PC-9 (cell line): ENCODE measurements at regions of chr10 and their contacts with region 1.

Region 1: GRCh38 chr10:43648398-43649184 is at the start of gene ZNF32:
- DNase-seq: peak; percentile 53 to 77
- H3K4me3 ChIP-seq: peak within 1 kb of the TSS; percentile 66
- H3K27ac ChIP-seq: no peak within 1 kb of the TSS
- H3K4me1 ChIP-seq: no peaks in the 10 kb centered on the region
- H3K27me3 ChIP-seq: peaks cover 23% of the 10 kb centered on the region; the same call in 1 of the 2 replicates
- CTCF ChIP-seq: no peak
- total RNA-seq, gene ZNF32: 9.8 and 16.8 TPM in 2 replicates

Region 2: DNA sequence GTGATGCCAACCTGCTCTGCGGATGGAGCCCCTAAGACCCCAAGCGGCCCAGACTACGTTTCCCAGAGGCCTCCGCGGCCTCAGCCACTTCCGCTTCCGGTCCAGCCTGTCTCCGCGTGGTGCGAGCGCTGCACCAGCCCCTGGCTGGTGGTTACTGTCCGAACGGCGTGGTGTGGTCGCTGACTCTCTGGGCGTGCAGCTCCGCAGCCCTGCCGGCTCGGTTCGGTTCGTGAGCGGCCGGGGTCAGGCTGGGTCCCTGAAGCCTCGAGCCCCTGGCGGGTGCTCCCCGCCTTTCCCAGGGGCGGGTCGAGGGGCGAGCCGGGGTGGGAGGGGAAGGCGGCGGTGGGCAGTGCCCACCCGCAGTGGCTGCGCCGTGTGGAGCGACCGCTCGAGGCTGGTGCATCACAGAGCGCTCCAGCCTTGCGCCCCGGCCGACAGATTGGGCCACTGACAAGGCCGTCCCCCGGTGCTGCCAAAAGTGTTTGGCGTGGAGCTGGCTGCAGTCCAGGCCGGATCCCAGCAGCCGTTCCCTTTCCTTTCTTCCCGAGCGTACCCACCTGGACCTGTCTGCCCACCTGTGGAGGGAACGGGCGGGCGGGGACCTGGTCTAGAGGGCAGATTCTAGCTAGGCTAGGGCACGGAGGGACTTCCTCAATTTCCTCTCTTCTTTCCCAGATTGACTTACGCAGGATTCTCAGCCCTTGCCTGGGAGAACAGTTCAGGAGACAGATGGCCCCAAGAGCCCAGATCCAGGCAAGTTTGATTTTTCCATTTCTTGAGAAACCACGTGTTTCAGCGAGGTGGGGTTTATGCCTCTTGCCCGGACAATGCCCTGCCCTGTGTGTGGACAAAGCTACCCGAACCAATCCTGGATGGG is 42.0 kb before region 1 on chr10 and contains the start of gene ZNF485:
- CTCF ChIA-PET with region 1: no interaction called
- POLR2A ChIA-PET with region 1: no interaction called
- intact Hi-C with region 1: loop called (anchors 1 kb)
- DNase-seq: peak in 1 of 2 experiments; percentile 55
- H3K4me3 ChIP-seq: peak within 1 kb of the TSS; percentile 85
- H3K27ac ChIP-seq: no peak within 1 kb of the TSS
- H3K4me1 ChIP-seq: peaks cover 6% of the 10 kb centered on the region; the same call in 1 of the 2 replicates
- H3K27me3 ChIP-seq: peaks cover 15% of the 10 kb centered on the region; the same call in 1 of the 2 replicates
- CTCF ChIP-seq: no peak
- total RNA-seq, gene ZNF485: 2.1 and 3.7 TPM in 2 replicates

Region 3: GRCh38 chr10:43679509-43679908 is 30.9 kb after region 1 on chr10:
- CTCF ChIA-PET with region 1: no interaction called
- POLR2A ChIA-PET with region 1: no interaction called
- intact Hi-C with region 1: no loop called
- DNase-seq: no peak
- H3K4me3 ChIP-seq: no peak overlapping the region
- H3K27ac ChIP-seq: no peak overlapping the region
- H3K4me1 ChIP-seq: no peaks in the 10 kb centered on the region
- H3K27me3 ChIP-seq: peaks cover 39% of the 10 kb centered on the region
- CTCF ChIP-seq: no peak

Region 4: DNA sequence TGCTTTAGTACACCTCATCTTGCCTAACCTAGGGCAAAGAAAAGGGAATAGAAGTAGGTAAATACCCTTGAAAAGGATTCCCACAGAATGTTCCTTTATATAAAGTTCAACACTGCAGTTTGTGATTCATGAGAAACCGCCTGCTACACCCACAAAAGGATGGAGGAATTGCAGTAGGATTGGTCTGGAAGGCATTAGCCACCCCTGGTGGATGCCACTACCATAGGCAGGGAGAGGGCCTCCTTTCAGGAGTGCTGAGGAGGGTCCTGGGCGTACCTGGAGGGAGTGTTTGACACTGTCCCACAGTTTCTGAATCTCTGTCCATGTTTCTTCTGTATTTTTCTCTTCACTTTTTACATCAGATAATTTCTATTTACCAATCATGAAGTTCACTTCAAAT is 1040.8 kb after region 1 on chr10:
- CTCF ChIA-PET with region 1: no interaction called
- POLR2A ChIA-PET with region 1: no interaction called
- intact Hi-C with region 1: no loop called
- DNase-seq: no peak
- H3K4me3 ChIP-seq: no peak overlapping the region
- H3K27ac ChIP-seq: no peak overlapping the region
- H3K4me1 ChIP-seq: no peaks in the 10 kb centered on the region
- H3K27me3 ChIP-seq: 0 out of 2 replicates have a peak, but pooled peaks cover 11% of the 10 kb centered on the region
- CTCF ChIP-seq: no peak